ENCODE measurements at regions of chr9 and their contacts with region 1.

Region 1: GRCh38 chr9:109972026-109972882 is 192.3 kb downstream of the PALM2AKAP2 start:
- DNase-seq: peak; percentile 43
- ATAC-seq: peak; percentile 65
- H3K4me3 Mint-ChIP-seq: peak overlapping the region; percentile 68
- H3K27ac Mint-ChIP-seq: peak overlapping the region; percentile 98
- H3K4me1 Mint-ChIP-seq: peaks cover 100% of the 10 kb centered on the region
- H3K27me3 Mint-ChIP-seq: no peaks in the 10 kb centered on the region
- CTCF ChIP-seq: no peak

Region 2: GRCh38 chr9:109908459-109909390 is 63.5 kb before region 1 on chr9:
- CTCF ChIA-PET with region 1: interaction called, 114 read pairs
- POLR2A ChIA-PET with region 1: interaction called, 704 read pairs
- intact Hi-C with region 1: loop called (anchors 1 kb)
- DNase-seq: no peak
- ATAC-seq: no peak
- H3K4me3 Mint-ChIP-seq: no peak overlapping the region
- H3K27ac Mint-ChIP-seq: no peak overlapping the region
- H3K4me1 Mint-ChIP-seq: peaks cover 18% of the 10 kb centered on the region
- H3K27me3 Mint-ChIP-seq: no peaks in the 10 kb centered on the region
- CTCF ChIP-seq: no peak

Region 3: DNA sequence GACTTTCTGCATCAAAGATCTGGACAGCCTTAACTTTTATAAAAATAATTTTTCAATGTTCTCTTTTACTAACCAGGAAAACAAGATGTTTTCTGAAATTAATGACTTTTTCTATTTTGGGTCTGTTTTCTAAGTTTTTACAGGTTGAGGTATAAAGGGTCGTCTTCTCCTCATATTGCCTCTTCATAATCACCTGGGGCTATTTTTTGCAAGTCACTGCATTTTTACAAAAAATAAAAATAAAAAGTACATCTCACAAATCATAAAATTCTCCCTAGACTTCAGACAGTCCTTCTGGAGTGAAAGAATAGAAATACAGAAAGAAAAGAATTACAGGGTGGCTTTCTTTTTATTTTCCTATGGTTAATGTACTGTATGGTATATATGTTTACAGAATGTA is 23.8 kb before region 1 on chr9:
- CTCF ChIA-PET with region 1: interaction called, 11 read pairs
- POLR2A ChIA-PET with region 1: interaction called, 49 read pairs
- intact Hi-C with region 1: no loop called
- DNase-seq: no peak
- ATAC-seq: no peak
- H3K4me3 Mint-ChIP-seq: no peak overlapping the region
- H3K27ac Mint-ChIP-seq: no peak overlapping the region
- H3K4me1 Mint-ChIP-seq: peaks cover 32% of the 10 kb centered on the region
- H3K27me3 Mint-ChIP-seq: no peaks in the 10 kb centered on the region
- CTCF ChIP-seq: no peak

Region 4: GRCh38 chr9:110007477-110008270 is 35.4 kb after region 1 on chr9:
- CTCF ChIA-PET with region 1: no interaction called
- POLR2A ChIA-PET with region 1: interaction called, 3 read pairs
- intact Hi-C with region 1: loop called (anchors 5 kb)
- DNase-seq: no peak
- ATAC-seq: no peak
- H3K4me3 Mint-ChIP-seq: no peak overlapping the region
- H3K27ac Mint-ChIP-seq: peak overlapping the region; percentile 39
- H3K4me1 Mint-ChIP-seq: peaks cover 42% of the 10 kb centered on the region
- H3K27me3 Mint-ChIP-seq: no peaks in the 10 kb centered on the region
- CTCF ChIP-seq: no peak

Region 5: GRCh38 chr9:110125207-110125751 is 153.0 kb after region 1 on chr9:
- CTCF ChIA-PET with region 1: interaction called, 3 read pairs
- POLR2A ChIA-PET with region 1: interaction called, 15 read pairs
- intact Hi-C with region 1: loop called (anchors 1 kb)
- DNase-seq: no peak
- ATAC-seq: no peak
- H3K4me3 Mint-ChIP-seq: peak overlapping the region; percentile 71
- H3K27ac Mint-ChIP-seq: peak overlapping the region; percentile 85
- H3K4me1 Mint-ChIP-seq: peaks cover 97% of the 10 kb centered on the region
- H3K27me3 Mint-ChIP-seq: no peaks in the 10 kb centered on the region
- CTCF ChIP-seq: no peak

Region 6: GRCh38 chr9:110256380-110257096 is 284.3 kb after region 1 on chr9 and contains the start of gene TXN:
- CTCF ChIA-PET with region 1: no interaction called
- POLR2A ChIA-PET with region 1: interaction called, 8 read pairs
- intact Hi-C with region 1: loop called (anchors 1 kb)
- DNase-seq: peak; percentile 84
- ATAC-seq: peak; percentile 80
- H3K4me3 Mint-ChIP-seq: peak within 1 kb of the TSS; percentile 92
- H3K27ac Mint-ChIP-seq: peak within 1 kb of the TSS; percentile 92
- H3K4me1 Mint-ChIP-seq: peaks cover 63% of the 10 kb centered on the region
- H3K27me3 Mint-ChIP-seq: no peaks in the 10 kb centered on the region
- CTCF ChIP-seq: no peak
- total RNA-seq, gene TXN: 205 and 237 TPM in 2 replicates

Measured in activated B cell treated with CpG ODN at 0.5 μM for 24 hours (primary cell).